ENCODE measurements at regions of chr15 and their contacts with region 1.

Region 1: GRCh38 chr15:81155375-81156218 is 21.5 kb downstream of the CFAP161 start:
- DNase-seq: peak; percentile 77
- ATAC-seq: peak; percentile 64
- H3K4me3 ChIP-seq: no peak overlapping the region
- H3K27ac ChIP-seq: peak overlapping the region; percentile 21; the same call in 1 of the 2 replicates
- H3K4me1 ChIP-seq: peaks cover 19% of the 10 kb centered on the region
- H3K27me3 ChIP-seq: no peaks in the 10 kb centered on the region
- CTCF ChIP-seq: peak; percentile 80
- POLR2A ChIP-seq: no peak
- RAD21 ChIP-seq: peak; percentile 86

Region 2: DNA sequence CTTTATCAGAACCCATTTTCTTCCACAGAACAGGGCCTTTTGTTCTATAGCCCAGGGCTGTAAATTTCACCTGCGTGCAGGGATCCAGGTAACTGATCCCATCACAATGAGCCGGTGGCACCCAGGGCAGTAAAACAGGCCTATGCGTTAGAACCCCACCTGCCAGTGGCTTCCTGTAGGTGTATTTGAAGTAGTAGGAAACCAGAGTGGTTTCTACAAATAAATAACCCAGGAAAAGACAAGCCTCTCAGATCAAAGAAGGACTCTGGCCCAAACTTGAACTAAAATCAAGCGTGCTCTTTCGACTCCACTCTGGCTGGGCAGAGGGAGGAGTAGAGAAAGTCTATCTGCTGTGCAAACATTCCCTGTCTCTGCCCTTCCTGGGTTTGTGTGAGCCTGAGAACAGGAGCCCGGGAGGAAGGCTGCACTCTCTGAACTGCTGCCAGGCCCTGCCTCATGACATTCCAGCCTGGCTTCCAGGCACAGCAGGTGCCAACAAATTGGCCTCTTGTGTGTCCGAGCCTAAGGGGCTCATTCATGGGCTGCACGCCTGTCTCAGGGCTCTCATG is 298.7 kb before region 1 on chr15:
- CTCF ChIA-PET with region 1: no interaction called
- POLR2A ChIA-PET with region 1: no interaction called
- dilution Hi-C with region 1: no loop called
- in situ Hi-C with region 1: no loop called
- intact Hi-C with region 1: no loop called
- DNase-seq: no peak
- ATAC-seq: no peak
- H3K4me3 ChIP-seq: no peak overlapping the region
- H3K27ac ChIP-seq: no peak overlapping the region
- H3K4me1 ChIP-seq: peaks cover 4% of the 10 kb centered on the region; the same call in 1 of the 2 replicates
- H3K27me3 ChIP-seq: no peaks in the 10 kb centered on the region; the same call in 1 of the 2 replicates
- CTCF ChIP-seq: no peak
- POLR2A ChIP-seq: no peak
- RAD21 ChIP-seq: no peak

Region 3: GRCh38 chr15:81023483-81024264 is 131.9 kb before region 1 on chr15:
- CTCF ChIA-PET with region 1: no interaction called
- POLR2A ChIA-PET with region 1: no interaction called
- dilution Hi-C with region 1: no loop called
- in situ Hi-C with region 1: no loop called
- intact Hi-C with region 1: no loop called
- DNase-seq: peak; percentile 66
- ATAC-seq: peak; percentile 21; the same call in 1 of the 2 replicates
- H3K4me3 ChIP-seq: no peak overlapping the region
- H3K27ac ChIP-seq: no peak overlapping the region
- H3K4me1 ChIP-seq: peaks cover 10% of the 10 kb centered on the region; the same call in 1 of the 2 replicates
- H3K27me3 ChIP-seq: no peaks in the 10 kb centered on the region
- CTCF ChIP-seq: no peak
- POLR2A ChIP-seq: no peak; the same call in 1 of the 2 replicates
- RAD21 ChIP-seq: no peak

Region 4: DNA sequence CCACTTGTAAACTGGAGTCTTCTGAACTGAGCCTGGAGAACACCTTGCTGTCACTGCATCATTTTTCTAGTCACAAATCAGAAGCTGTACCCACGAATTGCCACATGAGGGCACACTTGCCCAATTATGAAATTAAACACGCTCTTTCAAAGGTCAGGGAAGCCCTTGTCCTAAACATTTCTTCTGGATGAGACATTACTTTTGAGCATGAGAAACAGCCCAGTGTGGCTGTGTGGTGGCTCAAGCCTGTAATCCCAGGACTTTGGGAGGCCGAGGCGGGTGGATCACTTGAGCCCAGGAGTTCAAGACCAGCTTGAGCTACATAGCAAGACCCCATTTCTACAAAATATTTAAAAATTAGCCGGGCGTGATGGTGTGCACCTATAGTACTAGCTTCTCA is 49.0 kb before region 1 on chr15:
- CTCF ChIA-PET with region 1: interaction called, 4 read pairs
- POLR2A ChIA-PET with region 1: no interaction called
- dilution Hi-C with region 1: no loop called
- in situ Hi-C with region 1: no loop called
- intact Hi-C with region 1: loop called (anchors 2 kb)
- DNase-seq: peak; percentile 87
- ATAC-seq: peak; percentile 96
- H3K4me3 ChIP-seq: no peak overlapping the region
- H3K27ac ChIP-seq: no peak overlapping the region
- H3K4me1 ChIP-seq: 0 out of 2 replicates have a peak, but pooled peaks cover 3% of the 10 kb centered on the region
- H3K27me3 ChIP-seq: no peaks in the 10 kb centered on the region
- CTCF ChIP-seq: peak; percentile 90
- POLR2A ChIP-seq: no peak
- RAD21 ChIP-seq: peak; percentile 88

Region 5: DNA sequence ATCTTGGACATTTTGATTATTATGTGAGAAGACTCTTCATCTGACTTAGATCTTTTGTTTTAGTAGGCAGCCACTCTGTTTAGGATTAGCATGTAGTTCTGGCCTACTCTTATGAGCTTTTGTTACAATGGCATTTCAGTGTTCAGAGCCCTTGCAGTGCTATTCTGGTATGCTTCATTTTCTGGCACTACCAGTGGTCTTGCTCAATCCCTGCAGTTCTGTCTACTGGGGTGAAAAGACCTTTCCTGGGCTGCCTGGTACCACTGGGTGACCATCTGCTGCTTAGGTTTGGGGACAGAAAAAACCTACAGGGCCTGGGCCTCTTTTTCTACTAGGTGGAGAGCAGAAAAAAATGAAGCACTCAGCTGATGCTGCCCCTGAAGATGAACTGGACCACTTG is 83.6 kb after region 1 on chr15:
- CTCF ChIA-PET with region 1: no interaction called
- POLR2A ChIA-PET with region 1: no interaction called
- dilution Hi-C with region 1: no loop called
- in situ Hi-C with region 1: no loop called
- intact Hi-C with region 1: loop called (anchors 1 kb)
- DNase-seq: peak; percentile 41
- ATAC-seq: peak; percentile 75
- H3K4me3 ChIP-seq: no peak overlapping the region
- H3K27ac ChIP-seq: no peak overlapping the region
- H3K4me1 ChIP-seq: peaks cover 6% of the 10 kb centered on the region
- H3K27me3 ChIP-seq: no peaks in the 10 kb centered on the region
- CTCF ChIP-seq: no peak
- POLR2A ChIP-seq: no peak
- RAD21 ChIP-seq: no peak

Region 6: DNA sequence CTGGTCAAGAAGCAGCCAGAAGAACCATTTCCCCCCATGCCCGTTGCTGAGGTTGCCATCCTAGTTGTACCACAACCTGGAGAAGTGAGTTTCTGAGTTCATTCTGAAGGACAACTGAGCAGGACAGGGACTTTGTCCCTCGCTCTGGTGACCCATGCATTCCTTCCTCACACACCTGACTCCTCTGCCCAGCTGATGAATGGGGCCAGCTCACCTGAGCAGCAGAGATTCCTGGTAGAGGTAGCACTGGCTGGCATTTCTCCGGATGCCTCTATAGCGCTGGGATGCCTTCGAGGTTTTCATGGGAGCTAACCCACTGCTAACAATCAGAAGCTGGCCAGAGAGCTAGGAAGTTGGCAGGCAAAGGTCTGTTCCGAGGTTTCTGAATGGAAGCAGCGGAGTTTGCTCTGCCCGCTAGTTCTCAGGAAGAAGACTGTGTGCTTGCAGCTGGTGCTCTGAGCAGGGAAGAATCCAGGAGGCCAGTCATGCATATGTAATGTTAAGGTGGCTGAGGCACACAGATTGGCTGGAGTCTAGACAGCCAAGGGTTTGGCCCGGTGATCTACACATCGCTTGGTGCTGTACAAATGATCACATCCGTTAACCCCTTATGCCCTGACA is 218.3 kb after region 1 on chr15 and contains the start of gene TMC3:
- CTCF ChIA-PET with region 1: no interaction called
- POLR2A ChIA-PET with region 1: no interaction called
- dilution Hi-C with region 1: no loop called
- in situ Hi-C with region 1: no loop called
- intact Hi-C with region 1: no loop called
- DNase-seq: peak; percentile 3
- ATAC-seq: no peak
- H3K4me3 ChIP-seq: no peak within 1 kb of the TSS
- H3K27ac ChIP-seq: no peak within 1 kb of the TSS
- H3K4me1 ChIP-seq: no peaks in the 10 kb centered on the region
- H3K27me3 ChIP-seq: peaks cover 12% of the 10 kb centered on the region
- CTCF ChIP-seq: no peak
- POLR2A ChIP-seq: no peak
- RAD21 ChIP-seq: no peak
- total RNA-seq, gene TMC3: not detected in 2 replicates

Measured in IMR-90 (cell line).